ENCODE measurements at regions of chr1 and their contacts with region 1.

Region 1: GRCh38 chr1:180301135-180301742 is 71.2 kb downstream of the LHX4 start:
- DNase-seq: peak; percentile 25
- ATAC-seq: peak; percentile 70
- H3K4me3 ChIP-seq: no peak overlapping the region
- H3K27ac ChIP-seq: no peak overlapping the region
- H3K4me1 ChIP-seq: peaks cover 4% of the 10 kb centered on the region; the same call in 1 of the 2 replicates
- H3K27me3 ChIP-seq: no peaks in the 10 kb centered on the region
- CTCF ChIP-seq: no peak

Region 2: DNA sequence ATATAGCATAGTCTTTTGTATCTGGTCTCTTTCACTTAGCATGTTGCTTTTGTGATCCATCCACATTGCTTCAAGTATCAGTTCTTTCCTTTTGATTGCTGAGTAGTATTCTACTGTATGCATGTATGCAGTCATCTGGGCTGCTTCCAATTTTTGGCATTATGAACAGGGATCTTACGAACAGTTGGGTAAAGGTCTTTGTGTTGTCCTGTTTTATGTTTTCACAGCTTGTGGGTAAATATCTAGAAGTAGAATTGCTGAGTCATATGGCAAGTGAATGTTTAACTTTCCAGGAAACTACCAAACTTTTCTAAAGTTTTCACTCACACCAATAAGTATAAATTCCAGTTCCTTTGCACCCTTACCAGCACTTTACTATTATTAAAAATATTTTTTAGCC is 10.2 kb before region 1 on chr1:
- CTCF ChIA-PET with region 1: no interaction called
- POLR2A ChIA-PET with region 1: interaction called, 30 read pairs
- intact Hi-C with region 1: no loop called
- DNase-seq: peak; percentile 48
- ATAC-seq: peak; percentile 40; the same call in 1 of the 2 replicates
- H3K4me3 ChIP-seq: no peak overlapping the region
- H3K27ac ChIP-seq: 0 out of 2 replicates have a peak overlapping the region, but pooled peaks have one; percentile 8
- H3K4me1 ChIP-seq: 0 out of 2 replicates have a peak, but pooled peaks cover 4% of the 10 kb centered on the region
- H3K27me3 ChIP-seq: no peaks in the 10 kb centered on the region
- CTCF ChIP-seq: no peak

Region 3: GRCh38 chr1:180451504-180451903 is 150.3 kb after region 1 on chr1:
- CTCF ChIA-PET with region 1: no interaction called
- POLR2A ChIA-PET with region 1: no interaction called
- intact Hi-C with region 1: no loop called
- DNase-seq: no peak
- ATAC-seq: no peak
- H3K4me3 ChIP-seq: no peak overlapping the region
- H3K27ac ChIP-seq: no peak overlapping the region
- H3K4me1 ChIP-seq: no peaks in the 10 kb centered on the region
- H3K27me3 ChIP-seq: no peaks in the 10 kb centered on the region
- CTCF ChIP-seq: no peak